ENCODE measurements at regions of chr5 and their contacts with region 1.

Region 1: DNA sequence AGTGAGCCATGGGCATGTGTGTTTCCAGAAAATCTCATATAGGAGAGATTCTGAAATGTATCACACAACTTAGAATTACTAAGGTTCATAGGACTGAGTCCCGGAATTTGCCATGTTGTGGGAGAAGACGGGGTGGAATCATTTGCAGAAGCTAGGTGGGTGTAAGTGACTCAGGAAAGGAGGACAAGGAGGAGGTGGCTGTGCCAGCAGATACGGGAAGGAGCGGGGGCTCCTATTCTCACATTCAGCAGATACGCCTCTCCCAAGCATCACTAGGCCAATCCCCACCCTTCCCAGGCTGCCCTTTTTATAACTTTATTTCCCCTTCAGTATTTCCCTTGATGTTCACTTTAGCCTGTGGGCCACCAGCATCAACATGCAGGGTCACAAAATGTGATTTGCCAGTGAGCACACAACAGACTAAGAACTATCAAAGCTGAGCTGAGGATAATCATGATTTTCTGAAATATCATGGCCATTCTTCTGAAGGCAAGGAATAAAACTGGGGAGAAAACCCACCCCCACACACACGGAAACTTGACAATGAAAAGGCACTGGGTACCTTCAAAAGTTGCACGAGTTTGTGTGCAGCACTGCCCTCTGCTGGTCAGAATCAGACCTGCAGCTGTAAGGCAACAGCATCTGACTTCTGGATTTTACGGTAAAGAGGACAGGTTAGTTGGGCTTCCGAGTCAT is 133.2 kb downstream of the MTX3 start:
- DNase-seq: peak; percentile 60 to 94 (median 85)

Region 2: DNA sequence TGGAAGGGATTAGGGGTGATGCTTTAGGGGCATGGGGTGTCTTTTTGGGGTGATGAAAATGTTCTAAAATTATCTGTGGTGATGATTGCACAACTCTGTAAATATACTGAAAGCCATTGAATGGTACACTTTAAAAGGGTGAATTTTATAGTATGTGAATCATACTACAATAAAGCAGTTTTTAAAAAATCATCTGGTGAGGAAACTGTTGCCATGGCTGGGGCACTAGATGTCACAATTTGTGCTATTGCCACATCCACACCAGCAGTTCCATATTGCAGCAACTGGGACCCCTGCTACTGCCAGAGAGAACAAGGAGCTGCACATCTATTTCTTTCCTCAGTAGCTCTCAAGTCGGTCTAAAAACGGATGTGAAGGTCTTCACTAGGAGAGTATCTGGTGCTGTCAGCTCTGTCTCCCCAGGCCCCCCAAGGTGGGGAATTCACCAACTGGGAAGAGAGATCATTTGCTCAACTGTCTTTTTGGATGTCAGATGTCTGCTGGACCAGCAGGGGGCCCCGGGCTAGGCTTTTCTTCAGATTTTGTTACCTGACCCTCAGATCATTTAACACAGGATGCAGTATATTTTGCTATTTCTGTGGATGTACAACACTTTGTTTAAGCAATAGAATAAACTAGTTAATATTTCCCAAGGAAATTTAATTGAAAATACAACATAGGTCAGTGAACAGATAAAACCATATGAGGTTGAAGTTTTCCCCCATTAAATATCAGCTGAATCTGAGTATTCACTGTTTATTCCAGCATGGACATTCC is 155.1 kb before region 1 on chr5:
- intact Hi-C with region 1: no loop called
- DNase-seq: peak in 20 of 42 donors; percentile 8 to 62 (median 30)

Region 3: DNA sequence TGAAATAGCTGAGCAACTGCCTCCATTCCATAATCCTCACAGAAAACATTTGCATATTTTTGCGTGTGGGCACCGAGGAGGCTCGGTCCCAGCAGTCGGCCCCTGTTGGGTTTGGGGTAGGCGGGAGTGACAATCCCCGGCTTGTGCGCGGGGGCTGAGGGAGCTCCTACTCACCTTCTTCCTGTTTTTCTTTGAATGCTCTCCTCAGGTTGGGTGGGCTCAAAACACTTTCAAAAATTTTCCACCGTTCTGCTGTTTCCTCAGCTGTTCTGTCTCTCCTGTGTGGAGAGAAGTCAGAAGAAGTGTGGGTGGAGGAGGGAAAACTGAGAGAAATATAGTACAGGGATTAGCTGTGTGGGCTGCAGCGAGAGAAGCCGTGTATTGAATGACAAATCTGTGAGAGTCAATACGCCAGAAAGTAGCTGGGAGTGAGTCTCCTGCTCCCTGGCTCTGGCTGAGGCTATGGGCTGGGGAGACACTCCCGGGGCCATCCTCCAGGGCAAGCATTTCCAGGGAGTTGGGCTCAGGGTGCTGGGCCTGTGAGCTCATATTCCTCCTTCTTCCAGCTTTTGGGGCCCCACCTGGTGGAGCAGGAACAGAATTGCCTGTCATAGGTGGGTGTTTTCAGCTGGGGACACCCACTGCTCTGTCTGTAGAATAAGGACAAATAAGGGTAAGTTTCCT is 83.5 kb before region 1 on chr5:
- intact Hi-C with region 1: no loop called
- DNase-seq: peak in 39 of 42 donors; percentile 17 to 83 (median 55)

Region 4: DNA sequence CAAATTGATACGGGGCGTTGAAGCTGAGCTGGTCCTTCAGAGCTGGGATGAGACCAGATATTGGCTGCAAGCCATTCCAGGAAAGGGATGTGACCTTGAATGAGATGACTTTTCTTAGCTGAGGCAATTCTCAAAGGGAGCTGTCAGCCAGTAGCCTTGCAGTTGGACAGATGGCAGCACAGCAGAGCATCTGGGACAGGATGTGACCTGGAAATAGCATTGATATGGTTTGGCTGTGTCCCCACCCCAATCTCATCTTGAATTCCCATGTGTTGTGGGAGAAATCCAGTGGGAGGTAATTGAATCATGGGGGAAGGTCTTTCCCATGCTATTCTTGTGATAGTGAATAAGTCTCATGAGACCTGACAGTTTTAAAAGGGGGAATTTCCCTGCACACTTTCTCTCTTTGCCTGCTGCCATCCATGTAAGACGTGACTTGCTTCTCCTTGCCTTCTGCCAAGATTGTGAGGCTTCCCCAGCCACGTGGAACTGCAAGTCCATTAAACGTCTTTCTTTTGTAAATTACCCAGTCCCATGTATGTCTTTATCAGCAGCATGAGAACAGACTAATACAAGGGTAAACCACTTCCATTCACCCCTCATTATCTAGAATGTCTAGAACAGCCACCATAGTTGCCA is 153.0 kb after region 1 on chr5:
- intact Hi-C with region 1: no loop called
- DNase-seq: no peak

Region 5: GRCh38 chr5:80083101-80083890 is 225.4 kb after region 1 on chr5:
- intact Hi-C with region 1: loop called (anchors 10 kb)
- DNase-seq: peak in 31 of 42 donors; percentile 11 to 71 (median 35)